Endothelial cell of umbilical vein (primary cell): ENCODE measurements at regions of chr19 and their contacts with region 1.

Region 1: GRCh38 chr19:54115109-54116063 is at the starts of genes PRPF31 and TFPT:
- DNase-seq: peak; percentile 98
- H3K4me3 ChIP-seq: peak within 1 kb of the TSS; percentile 51 to 81 (median 68)
- H3K27ac ChIP-seq: peak within 1 kb of the TSS; percentile 73
- H3K4me1 ChIP-seq: peaks cover 7% of the 10 kb centered on the region
- H3K27me3 ChIP-seq: no peaks in the 10 kb centered on the region
- CTCF ChIP-seq: no peak
- POLR2A ChIP-seq: peak; percentile 71
- total RNA-seq, gene PRPF31: 99.1 and 101 TPM in 2 replicates
- total RNA-seq, gene TFPT: 32.1 and 36.2 TPM in 2 replicates

Region 2: DNA sequence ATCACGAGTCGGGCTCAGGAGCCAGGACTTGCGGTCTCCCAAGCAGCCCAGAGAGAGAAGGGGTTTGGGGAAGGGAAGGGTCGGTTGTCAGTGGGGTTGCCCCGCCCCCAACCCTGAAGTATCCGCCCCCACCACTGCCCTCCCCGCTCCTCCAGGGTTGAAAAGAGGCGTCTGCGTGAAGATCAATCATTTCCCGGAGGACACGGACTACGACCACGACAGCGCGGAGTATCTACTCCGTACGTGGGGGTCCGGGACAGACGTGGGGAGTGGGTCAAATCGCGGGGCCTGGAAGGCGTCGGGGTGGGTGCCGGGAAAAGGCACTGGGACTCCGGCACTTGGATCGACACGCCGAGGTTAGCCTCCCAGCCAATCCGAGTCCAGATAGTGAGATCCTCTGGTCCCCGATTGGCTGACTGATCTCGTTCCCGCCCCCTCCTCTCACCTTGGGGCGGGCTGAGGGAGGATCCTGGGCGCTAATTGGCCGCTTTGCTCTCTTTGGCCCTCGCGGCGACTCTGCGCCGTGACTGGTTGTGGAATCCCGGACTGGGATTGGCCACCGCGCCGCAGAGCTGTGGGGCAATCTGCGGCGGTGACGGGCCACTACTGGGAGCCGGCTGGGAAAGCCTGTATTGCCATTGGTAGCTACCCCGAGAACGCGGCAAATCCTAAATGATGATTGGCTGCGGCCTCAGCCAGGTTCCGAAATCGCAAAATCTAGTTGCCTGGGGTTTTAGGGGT is 137.2 kb before region 1 on chr19:
- CTCF ChIA-PET with region 1: no interaction called
- POLR2A ChIA-PET with region 1: no interaction called
- dilution Hi-C with region 1: no loop called
- intact Hi-C with region 1: loop called (anchors 5 kb)
- DNase-seq: peak; percentile 94
- H3K4me3 ChIP-seq: peak overlapping the region in 1 of 3 experiments; percentile 30
- H3K27ac ChIP-seq: no peak overlapping the region
- H3K4me1 ChIP-seq: peaks cover 19% of the 10 kb centered on the region
- H3K27me3 ChIP-seq: no peaks in the 10 kb centered on the region
- CTCF ChIP-seq: no peak
- POLR2A ChIP-seq: no peak

Region 3: DNA sequence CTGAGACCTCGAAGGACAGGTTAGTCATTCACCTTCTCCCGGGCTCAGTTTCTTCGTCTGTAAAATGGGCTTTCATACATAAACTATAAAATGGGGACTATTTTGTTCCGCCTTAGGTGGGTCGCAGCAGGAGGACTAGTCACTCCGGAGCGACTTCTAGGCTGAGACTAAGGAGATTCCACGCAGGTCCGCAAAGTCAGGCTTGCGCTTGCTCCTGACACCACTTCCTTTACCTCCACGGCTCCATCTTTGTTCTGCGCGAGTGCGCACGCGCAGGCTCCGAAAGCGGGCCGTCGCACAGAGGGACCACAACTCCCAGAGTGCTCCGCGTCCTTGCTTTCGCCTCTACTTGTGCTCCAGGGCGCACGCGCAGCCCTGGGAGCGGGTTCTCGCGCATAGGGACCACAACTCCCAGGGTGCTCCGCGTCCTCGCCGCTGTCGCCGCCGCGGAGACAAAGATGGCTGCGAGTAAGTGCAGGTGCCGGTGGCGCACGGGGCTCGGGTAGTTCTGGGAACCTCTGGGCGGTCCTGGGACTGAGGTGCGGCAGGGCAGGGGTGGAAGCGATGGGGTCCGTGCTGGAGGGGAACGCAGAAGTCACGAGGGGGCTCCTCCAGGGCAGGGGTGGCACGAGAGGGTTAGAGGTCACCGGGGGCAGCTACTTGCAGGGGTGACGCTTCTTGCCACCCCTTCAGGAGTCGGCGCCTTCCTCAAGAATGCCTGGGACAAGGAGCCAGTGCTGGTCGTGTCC is 12.8 kb before region 1 on chr19 and contains the start of gene NDUFA3:
- CTCF ChIA-PET with region 1: no interaction called
- POLR2A ChIA-PET with region 1: interaction called, 4 read pairs
- dilution Hi-C with region 1: no loop called
- intact Hi-C with region 1: loop called (anchors 1 kb)
- DNase-seq: peak; percentile 99
- H3K4me3 ChIP-seq: peak within 1 kb of the TSS; percentile 15 to 97 (median 57)
- H3K27ac ChIP-seq: no peak within 1 kb of the TSS
- H3K4me1 ChIP-seq: no peaks in the 10 kb centered on the region
- H3K27me3 ChIP-seq: no peaks in the 10 kb centered on the region
- CTCF ChIP-seq: no peak
- POLR2A ChIP-seq: peak; percentile 87
- total RNA-seq, gene NDUFA3: 119 and 132 TPM in 2 replicates

Region 4: GRCh38 chr19:54137086-54137921 is 21.9 kb after region 1 on chr19 and contains the start of gene CNOT3:
- CTCF ChIA-PET with region 1: interaction called, 7 read pairs
- POLR2A ChIA-PET with region 1: interaction called, 13 read pairs
- dilution Hi-C with region 1: no loop called
- intact Hi-C with region 1: loop called (anchors 1 kb)
- DNase-seq: peak; percentile 100
- H3K4me3 ChIP-seq: peak within 1 kb of the TSS; percentile 66 to 98 (median 69)
- H3K27ac ChIP-seq: peak within 1 kb of the TSS; percentile 71
- H3K4me1 ChIP-seq: peaks cover 17% of the 10 kb centered on the region
- H3K27me3 ChIP-seq: no peaks in the 10 kb centered on the region
- CTCF ChIP-seq: no peak
- POLR2A ChIP-seq: peak; percentile 72
- total RNA-seq, gene CNOT3: 62.4 and 74.7 TPM in 2 replicates